ENCODE measurements at regions of chr4 and their contacts with region 1.

Region 1: GRCh38 chr4:173522123-173522950 is 7.7 kb downstream of the HAND2 start:
- DNase-seq: peak; percentile 26
- ATAC-seq: no peak
- H3K4me3 Mint-ChIP-seq: peak overlapping the region; percentile 51
- H3K27ac Mint-ChIP-seq: no peak overlapping the region
- H3K4me1 Mint-ChIP-seq: peaks cover 20% of the 10 kb centered on the region
- H3K27me3 Mint-ChIP-seq: peaks cover 88% of the 10 kb centered on the region

Region 2: DNA sequence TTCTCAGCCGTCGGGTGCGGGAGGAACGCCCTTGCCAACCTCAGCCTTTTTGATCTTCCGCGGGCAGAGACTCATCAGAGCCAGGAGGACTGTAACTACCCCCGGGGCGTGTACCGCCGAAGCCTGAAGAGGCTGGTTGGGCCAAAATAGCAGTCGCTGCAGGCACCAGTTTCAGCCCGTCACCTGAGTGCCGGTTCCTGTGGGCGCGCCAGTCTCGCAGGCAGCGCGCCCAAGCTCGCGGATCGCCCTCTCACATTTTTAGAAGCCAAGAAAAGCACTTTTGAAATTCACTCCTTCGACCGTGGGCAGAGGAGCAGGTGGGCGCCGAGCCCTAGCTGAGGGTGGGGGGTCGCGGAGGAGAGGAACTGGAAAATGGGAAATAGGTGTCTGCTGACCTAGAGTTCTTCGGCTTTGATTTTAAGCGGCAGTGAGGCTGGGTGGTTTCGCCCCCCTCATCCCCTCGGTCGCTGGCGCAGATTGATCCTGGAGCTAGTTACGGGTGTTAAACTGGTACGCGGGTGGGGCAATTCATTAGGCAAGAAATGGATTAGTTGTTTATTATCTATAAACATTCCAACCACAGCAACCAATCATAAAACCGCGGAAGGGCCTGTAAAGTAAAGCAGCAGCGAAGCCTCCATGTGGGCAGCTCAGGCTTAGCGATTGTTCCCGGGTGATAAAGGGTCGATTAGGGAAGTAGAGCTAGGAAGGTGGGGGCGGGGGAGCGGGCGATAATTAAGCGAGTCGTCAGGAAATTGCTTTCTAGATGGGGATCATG is 692.0 kb after region 1 on chr4:
- CTCF ChIA-PET with region 1: no interaction called
- POLR2A ChIA-PET with region 1: no interaction called
- intact Hi-C with region 1: loop called (anchors 2 to 5 kb)
- DNase-seq: peak; percentile 56
- ATAC-seq: peak; percentile 71
- H3K4me3 Mint-ChIP-seq: peak overlapping the region; percentile 55
- H3K27ac Mint-ChIP-seq: no peak overlapping the region
- H3K4me1 Mint-ChIP-seq: peaks cover 48% of the 10 kb centered on the region
- H3K27me3 Mint-ChIP-seq: peaks cover 83% of the 10 kb centered on the region

Measured in activated CD4-positive, alpha-beta T cell treated with anti-CD3 and anti-CD28 coated beads for 36 hours (primary cell).